ENCODE measurements at regions of chr12 and their contacts with region 1.

Region 1: DNA sequence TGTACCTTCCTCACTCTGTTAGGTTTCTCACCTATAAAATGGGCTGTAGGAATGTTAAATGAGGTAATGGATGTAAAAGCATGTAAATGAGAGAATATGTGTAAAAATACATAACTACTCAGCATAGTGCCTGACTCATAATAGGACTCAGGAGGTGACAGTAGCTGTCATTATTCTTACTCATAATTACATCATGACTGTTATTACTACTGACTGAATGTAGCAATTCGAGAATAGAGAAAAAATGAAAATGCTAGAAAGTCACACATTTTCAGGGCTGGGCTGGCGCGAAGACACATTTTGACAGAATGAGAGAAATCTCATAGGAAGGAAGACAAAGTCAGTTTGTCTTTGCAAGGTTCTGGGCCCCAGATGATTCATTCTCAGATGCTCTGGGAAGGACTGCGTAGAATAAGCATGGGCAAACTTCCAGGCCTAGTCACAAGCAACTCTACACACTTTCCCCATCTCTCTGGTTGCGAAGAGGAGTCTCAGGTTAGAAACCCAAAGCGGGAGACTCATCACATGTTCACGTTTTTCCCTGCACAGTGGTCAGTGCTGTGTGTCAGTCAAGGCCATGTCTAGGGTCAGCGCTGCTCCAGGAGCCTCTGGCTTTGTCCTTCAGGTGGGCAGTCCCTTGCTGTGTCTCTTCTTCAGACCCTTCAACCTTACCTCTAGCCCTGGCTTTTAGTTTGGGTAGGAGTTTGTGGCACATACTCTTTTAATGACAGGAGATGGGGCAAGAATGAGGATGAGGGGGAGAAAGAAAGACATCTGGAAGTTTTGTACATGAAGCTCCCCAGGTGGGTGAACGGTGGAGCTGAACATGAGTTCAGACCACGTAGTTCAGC is 8.4 kb downstream of the GPRC5A start:
- DNase-seq: peak; percentile 67
- H3K4me3 Mint-ChIP-seq: no peak overlapping the region
- H3K27ac Mint-ChIP-seq: peak overlapping the region; percentile 79
- H3K4me1 Mint-ChIP-seq: peaks cover 10% of the 10 kb centered on the region
- H3K27me3 Mint-ChIP-seq: peaks cover 3% of the 10 kb centered on the region

Region 2: GRCh38 chr12:12837025-12837872 is 62.5 kb before region 1 on chr12:
- intact Hi-C with region 1: loop called (anchors 1 kb)
- DNase-seq: peak; percentile 75
- H3K4me3 Mint-ChIP-seq: no peak overlapping the region
- H3K27ac Mint-ChIP-seq: peak overlapping the region; percentile 77
- H3K4me1 Mint-ChIP-seq: peaks cover 32% of the 10 kb centered on the region
- H3K27me3 Mint-ChIP-seq: no peaks in the 10 kb centered on the region

Region 3: GRCh38 chr12:12946686-12947355 is 47.1 kb after region 1 on chr12:
- intact Hi-C with region 1: no loop called
- DNase-seq: no peak
- H3K4me3 Mint-ChIP-seq: no peak overlapping the region
- H3K27ac Mint-ChIP-seq: no peak overlapping the region
- H3K4me1 Mint-ChIP-seq: peaks cover 2% of the 10 kb centered on the region
- H3K27me3 Mint-ChIP-seq: peaks cover 6% of the 10 kb centered on the region